ENCODE measurements at regions of chr12 and their contacts with region 1.

Region 1: DNA sequence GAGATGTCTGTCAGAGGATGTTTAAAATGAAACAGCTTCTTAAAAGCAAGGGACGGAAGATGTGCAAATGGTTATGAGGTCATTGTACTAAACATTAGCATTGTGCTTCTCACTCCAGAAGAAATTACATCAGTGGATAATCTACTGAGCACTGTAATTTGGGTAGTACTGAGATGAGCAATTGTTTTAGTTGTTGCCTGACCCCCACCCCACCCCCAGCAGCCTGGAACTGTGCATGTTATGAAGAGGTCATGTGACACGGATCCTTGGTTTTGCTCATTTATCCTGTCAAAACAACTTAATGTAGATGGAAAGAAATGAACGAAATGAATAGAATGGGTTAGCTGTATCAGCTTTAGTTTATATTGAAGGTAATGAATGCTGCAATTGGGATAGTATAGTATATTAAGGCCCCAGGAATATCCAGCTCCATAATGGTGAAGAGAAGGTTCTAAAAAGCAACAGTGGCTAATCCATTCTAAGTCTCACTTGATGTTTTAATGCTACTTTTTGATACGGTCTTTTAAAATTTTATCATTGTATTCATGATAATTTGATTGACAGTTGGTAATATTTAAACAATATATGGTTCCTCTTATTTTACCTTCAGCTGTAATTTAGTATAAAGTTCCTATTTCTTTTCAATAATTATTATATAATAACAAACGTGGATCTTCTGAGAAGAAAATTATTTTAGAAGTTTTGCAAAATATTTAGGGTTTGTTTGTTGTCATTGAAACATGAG is 58.5 kb downstream of the WNK1 start:
- DNase-seq: no peak
- ATAC-seq: peak; percentile 49
- H3K4me3 Mint-ChIP-seq: no peak overlapping the region
- H3K27ac Mint-ChIP-seq: peak overlapping the region; percentile 41
- H3K4me1 Mint-ChIP-seq: peaks cover 59% of the 10 kb centered on the region
- H3K27me3 Mint-ChIP-seq: no peaks in the 10 kb centered on the region
- CTCF ChIP-seq: no peak

Region 2: GRCh38 chr12:569803-570434 is 240.9 kb before region 1 on chr12:
- CTCF ChIA-PET with region 1: interaction called, 64 read pairs
- POLR2A ChIA-PET with region 1: no interaction called
- intact Hi-C with region 1: loop called (anchors 1 kb)
- DNase-seq: peak; percentile 84
- ATAC-seq: peak; percentile 98
- H3K4me3 Mint-ChIP-seq: peak overlapping the region; percentile 81
- H3K27ac Mint-ChIP-seq: no peak overlapping the region
- H3K4me1 Mint-ChIP-seq: peaks cover 4% of the 10 kb centered on the region
- H3K27me3 Mint-ChIP-seq: no peaks in the 10 kb centered on the region
- CTCF ChIP-seq: no peak

Region 3: DNA sequence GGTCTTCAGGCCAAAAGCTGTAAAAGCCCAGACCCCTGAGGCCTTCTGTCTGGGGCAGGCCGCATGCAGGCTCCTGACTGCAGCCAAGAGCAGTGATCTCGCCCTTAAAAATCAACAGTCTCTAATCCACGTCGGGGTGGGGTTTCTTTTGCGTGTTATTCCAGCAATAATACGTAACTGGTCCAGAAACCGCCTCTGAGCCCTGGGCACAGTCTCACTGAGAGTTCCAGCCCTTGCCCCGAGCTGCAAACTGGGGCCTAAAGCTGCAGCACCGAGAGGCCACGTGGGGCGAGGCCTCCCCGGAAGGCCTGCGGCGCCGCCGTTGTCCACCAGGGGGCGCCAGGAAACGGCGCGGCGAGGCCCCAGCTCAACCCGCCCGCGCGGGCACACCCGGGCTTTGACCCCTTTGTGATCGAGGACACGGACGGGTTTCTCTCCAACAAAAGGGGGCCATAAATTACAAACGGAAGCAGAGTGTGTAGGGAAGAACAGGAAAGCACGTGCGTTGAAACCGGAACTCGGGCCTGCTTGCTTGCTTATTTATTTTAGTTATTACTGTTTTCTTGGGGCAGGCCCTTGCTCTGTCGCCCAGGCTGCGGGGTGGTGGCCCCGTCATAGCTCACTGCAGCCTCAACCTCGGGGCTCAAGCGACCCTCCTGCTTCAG is 234.8 kb before region 1 on chr12:
- CTCF ChIA-PET with region 1: interaction called, 64 read pairs
- POLR2A ChIA-PET with region 1: interaction called, 9 read pairs
- intact Hi-C with region 1: loop called (anchors 1 kb)
- DNase-seq: peak; percentile 91
- ATAC-seq: peak; percentile 99
- H3K4me3 Mint-ChIP-seq: peak overlapping the region; percentile 75
- H3K27ac Mint-ChIP-seq: no peak overlapping the region
- H3K4me1 Mint-ChIP-seq: peaks cover 11% of the 10 kb centered on the region
- H3K27me3 Mint-ChIP-seq: no peaks in the 10 kb centered on the region
- CTCF ChIP-seq: peak; percentile 70

Region 4: DNA sequence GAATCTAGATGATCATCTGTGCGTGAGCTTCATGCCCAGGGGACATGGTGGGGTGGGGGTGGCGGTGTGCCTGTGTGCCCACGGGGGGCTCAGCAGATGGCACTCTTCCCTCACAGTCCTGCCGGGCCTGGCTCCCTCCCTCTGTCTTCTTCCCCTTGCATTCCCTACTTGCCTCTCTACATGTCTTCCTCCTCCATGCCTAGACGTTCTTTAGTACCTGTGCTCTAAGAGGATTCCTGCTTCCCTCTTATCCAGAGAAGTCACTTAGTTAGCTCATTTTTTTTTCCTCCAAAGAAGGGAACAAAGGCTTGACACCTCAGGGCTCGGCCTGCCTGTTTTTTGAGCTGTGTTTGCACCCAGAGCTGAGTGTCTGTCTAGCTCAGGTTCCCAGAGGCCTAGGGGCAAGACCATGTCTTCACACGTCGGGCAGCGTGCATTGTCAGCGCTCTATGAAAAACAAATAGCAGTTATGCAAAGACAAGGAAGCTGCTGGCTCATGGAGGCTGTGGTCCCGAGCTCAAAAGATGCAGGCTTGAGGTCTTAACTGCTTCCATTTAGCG is 196.4 kb before region 1 on chr12:
- CTCF ChIA-PET with region 1: interaction called, 103 read pairs
- POLR2A ChIA-PET with region 1: interaction called, 5 read pairs
- intact Hi-C with region 1: loop called (anchors 1 kb)
- DNase-seq: peak; percentile 38
- ATAC-seq: peak; percentile 73
- H3K4me3 Mint-ChIP-seq: no peak overlapping the region
- H3K27ac Mint-ChIP-seq: no peak overlapping the region
- H3K4me1 Mint-ChIP-seq: peaks cover 25% of the 10 kb centered on the region
- H3K27me3 Mint-ChIP-seq: no peaks in the 10 kb centered on the region
- CTCF ChIP-seq: no peak

Region 5: GRCh38 chr12:779745-780734 is 30.8 kb before region 1 on chr12:
- CTCF ChIA-PET with region 1: interaction called, 9 read pairs
- POLR2A ChIA-PET with region 1: no interaction called
- intact Hi-C with region 1: loop called (anchors 5 kb)
- DNase-seq: no peak
- ATAC-seq: no peak
- H3K4me3 Mint-ChIP-seq: peak overlapping the region; percentile 29
- H3K27ac Mint-ChIP-seq: no peak overlapping the region
- H3K4me1 Mint-ChIP-seq: peaks cover 68% of the 10 kb centered on the region
- H3K27me3 Mint-ChIP-seq: no peaks in the 10 kb centered on the region
- CTCF ChIP-seq: no peak

Region 6: DNA sequence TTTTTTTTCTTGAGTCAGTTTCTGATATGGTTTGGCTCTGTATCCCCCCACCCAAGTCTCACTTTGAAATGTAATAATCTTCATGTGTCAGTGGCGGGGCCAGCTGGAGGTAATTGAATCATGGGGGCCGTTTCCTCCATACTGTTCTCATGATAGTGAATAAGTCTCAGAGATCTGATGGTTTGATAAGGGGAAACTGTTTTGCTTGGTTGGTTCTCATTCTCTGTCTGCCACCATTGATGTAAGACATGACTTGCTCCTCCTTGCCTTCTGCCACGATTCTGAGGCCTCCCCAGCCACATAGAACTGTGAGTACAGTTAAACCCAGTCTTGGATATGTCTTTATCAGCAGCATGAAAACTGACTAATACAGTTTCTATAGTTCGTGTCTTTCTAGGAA is 15.5 kb before region 1 on chr12:
- CTCF ChIA-PET with region 1: interaction called, 4 read pairs
- POLR2A ChIA-PET with region 1: interaction called, 3 read pairs
- intact Hi-C with region 1: loop called (anchors 2 kb)
- DNase-seq: no peak
- ATAC-seq: peak; percentile 81
- H3K4me3 Mint-ChIP-seq: peak overlapping the region; percentile 55
- H3K27ac Mint-ChIP-seq: peak overlapping the region; percentile 81
- H3K4me1 Mint-ChIP-seq: peaks cover 65% of the 10 kb centered on the region
- H3K27me3 Mint-ChIP-seq: no peaks in the 10 kb centered on the region
- CTCF ChIP-seq: no peak